ENCODE measurements at regions of chr15 and their contacts with region 1.

Region 1: GRCh38 chr15:73240866-73241499 is 127.8 kb downstream of the HCN4 start:
- DNase-seq: peak; percentile 83
- H3K4me3 Mint-ChIP-seq: no peak overlapping the region
- H3K27ac Mint-ChIP-seq: no peak overlapping the region
- H3K4me1 Mint-ChIP-seq: no peaks in the 10 kb centered on the region
- H3K27me3 Mint-ChIP-seq: no peaks in the 10 kb centered on the region
- CTCF ChIP-seq: peak; percentile 73

Region 2: DNA sequence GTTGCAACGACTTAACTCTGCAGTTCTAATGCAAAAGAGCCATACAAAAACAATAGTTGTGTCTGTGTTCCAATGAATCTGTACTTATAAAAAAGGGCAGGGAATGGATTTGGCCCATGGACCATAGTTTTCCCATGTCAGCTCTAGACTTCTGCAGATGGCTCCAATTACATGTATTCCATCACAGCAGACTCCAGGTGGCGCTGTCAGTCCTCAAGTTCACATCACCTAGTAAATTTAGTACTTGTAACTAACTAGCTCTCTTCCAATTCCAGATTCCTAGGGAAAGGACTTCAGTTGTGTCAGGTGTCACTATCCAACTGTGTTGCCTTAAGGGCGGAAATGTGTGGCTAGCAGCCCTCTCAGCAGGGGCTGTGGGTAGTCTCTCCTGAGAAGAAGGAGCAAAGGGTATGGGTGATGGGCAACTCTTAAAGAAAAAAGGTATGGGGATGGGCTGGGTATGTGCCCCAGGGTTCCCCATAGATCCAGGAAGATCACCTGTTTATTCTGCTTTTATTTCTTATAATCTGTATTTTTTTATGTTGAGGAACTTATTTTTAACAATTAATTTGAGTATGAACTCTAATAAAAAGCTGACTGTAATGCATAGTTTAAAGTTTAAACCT is 518.8 kb before region 1 on chr15:
- CTCF ChIA-PET with region 1: interaction called, 5 read pairs
- intact Hi-C with region 1: loop called (anchors 5 kb)
- DNase-seq: peak; percentile 74
- H3K4me3 Mint-ChIP-seq: no peak overlapping the region
- H3K27ac Mint-ChIP-seq: no peak overlapping the region
- H3K4me1 Mint-ChIP-seq: peaks cover 6% of the 10 kb centered on the region
- H3K27me3 Mint-ChIP-seq: no peaks in the 10 kb centered on the region
- CTCF ChIP-seq: peak; percentile 84

Region 3: DNA sequence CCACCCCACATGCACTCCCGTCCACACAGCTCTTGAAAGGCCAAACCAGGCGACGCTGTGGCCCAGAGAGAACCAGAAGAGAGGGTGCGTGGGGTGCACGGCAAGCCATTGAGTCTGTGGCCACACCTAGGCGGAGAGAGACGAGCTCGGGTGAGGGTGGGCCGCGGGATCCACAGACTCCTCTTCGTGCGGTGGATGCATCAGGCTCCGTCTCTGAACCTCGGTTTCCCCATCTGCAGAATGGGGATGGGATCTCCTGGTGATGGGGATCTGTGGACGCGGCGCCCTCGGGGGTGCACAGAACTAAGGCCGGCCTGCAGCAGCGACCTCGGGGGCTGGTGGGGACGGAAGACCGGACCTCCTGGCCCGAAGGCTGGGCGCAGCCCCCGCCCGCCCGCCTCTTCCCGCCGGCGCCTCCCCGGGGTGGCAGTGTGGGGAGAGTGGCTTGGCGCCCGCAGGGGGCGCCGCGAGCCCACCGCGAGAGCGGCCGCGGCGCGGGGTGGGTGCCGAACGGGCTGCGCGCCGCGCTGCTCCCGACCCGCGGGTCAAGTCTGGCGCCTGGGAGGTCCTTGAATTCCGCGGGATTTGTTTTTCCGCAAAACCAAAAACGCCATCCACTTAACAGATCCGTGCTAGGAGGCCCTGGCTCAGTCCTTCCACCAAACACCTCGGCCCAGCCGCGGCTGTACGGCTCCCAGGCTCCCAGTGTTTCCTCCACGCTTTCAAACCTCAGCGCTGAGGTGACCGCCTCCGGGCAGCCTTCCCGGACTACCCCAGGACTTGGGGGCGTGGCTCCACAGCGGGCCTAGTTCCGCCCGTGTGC is 444.3 kb before region 1 on chr15:
- CTCF ChIA-PET with region 1: interaction called, 3 read pairs
- intact Hi-C with region 1: loop called (anchors 2 kb)
- DNase-seq: peak; percentile 55
- H3K4me3 Mint-ChIP-seq: peak overlapping the region; percentile 70
- H3K27ac Mint-ChIP-seq: peak overlapping the region; percentile 10
- H3K4me1 Mint-ChIP-seq: peaks cover 12% of the 10 kb centered on the region
- H3K27me3 Mint-ChIP-seq: peaks cover 50% of the 10 kb centered on the region
- CTCF ChIP-seq: peak; percentile 72

Region 4: GRCh38 chr15:73127301-73127936 is 113.6 kb before region 1 on chr15:
- CTCF ChIA-PET with region 1: no interaction called
- intact Hi-C with region 1: loop called (anchors 2 kb)
- DNase-seq: peak; percentile 46
- H3K4me3 Mint-ChIP-seq: no peak overlapping the region
- H3K27ac Mint-ChIP-seq: no peak overlapping the region
- H3K4me1 Mint-ChIP-seq: no peaks in the 10 kb centered on the region
- H3K27me3 Mint-ChIP-seq: no peaks in the 10 kb centered on the region
- CTCF ChIP-seq: peak; percentile 67

Region 5: DNA sequence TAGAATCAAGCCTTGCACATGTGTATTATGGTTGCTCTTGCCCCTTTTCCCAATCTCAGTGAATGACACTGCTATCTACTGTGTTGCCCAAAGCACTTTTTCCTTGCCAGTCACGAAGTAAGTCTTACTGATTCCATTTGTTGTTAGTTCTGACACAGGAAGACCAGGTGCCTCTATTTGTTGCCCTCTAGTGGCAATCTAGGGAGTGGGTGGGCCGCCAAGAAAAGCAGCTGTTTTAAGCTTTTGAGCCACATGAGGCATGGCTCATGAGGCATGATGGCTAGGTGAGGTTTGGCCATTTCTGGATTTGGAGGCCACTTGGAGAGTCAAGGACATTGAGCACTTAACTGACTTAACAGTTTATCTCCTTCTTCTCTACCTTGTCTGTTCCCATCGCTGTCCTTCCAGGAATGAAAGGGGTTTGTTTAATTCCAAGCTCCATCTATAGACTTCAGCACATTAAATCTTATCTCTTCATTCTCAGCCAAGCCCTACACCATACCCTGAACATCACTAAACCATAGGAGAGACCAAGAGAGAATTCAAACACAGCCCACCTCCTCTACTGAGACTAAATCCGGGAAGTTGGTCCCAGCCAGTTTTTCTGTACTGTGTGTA is 24.7 kb after region 1 on chr15:
- CTCF ChIA-PET with region 1: interaction called, 10 read pairs
- intact Hi-C with region 1: no loop called
- DNase-seq: peak; percentile 70
- H3K4me3 Mint-ChIP-seq: no peak overlapping the region
- H3K27ac Mint-ChIP-seq: no peak overlapping the region
- H3K4me1 Mint-ChIP-seq: no peaks in the 10 kb centered on the region
- H3K27me3 Mint-ChIP-seq: no peaks in the 10 kb centered on the region
- CTCF ChIP-seq: peak; percentile 77

Measured in Calu3 (cell line).